ENCODE measurements at regions of chr3 and their contacts with region 1.

Region 1: DNA sequence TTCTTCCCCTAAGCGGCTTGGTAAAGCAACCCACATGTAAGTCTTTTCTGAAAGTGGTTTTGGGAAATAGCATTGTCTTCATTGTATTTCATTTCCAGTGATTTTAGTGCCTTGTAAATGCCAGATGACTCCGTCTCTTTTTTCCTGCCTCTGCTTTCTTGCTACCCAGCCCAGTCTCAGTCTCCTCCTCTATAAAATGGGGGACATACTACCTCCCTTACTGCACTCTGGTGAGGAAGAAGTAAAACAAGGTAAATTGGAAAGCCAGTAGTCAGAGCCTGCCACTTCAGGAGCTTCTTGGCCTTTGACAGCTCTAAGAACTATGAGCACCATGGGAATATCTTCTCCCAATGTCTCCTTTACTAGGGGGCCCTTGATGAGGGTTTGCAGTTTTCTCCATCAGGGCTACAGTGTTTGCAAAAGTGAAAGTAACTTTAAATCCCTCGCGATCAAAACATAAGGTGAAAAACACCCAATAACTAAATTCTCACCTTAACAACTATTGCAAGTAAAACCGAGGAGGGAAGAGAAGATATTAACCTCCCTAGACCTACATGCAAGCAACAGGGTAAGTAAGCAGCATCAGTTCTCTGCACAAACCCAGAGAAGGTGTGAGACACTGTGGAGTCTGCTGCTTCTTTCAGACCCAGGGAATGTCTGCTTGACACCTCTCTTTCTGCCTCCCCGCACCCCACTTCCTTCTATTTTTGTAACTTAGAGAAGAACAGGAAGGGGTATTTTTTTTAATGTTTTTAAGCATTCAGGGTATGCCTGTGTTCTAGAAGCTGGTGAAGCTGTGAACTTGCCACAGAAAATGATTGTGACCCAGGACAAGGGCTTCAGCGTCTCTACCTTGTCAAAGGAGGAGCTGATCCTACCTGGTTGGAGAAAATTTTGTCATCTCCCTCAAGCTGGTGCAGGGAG is 159.1 kb upstream of the EOMES start:
- DNase-seq: peak; percentile 38
- ATAC-seq: peak; percentile 60
- H3K4me3 Mint-ChIP-seq: peak overlapping the region; percentile 71
- H3K27ac Mint-ChIP-seq: peak overlapping the region; percentile 79
- H3K4me1 Mint-ChIP-seq: peaks cover 57% of the 10 kb centered on the region
- H3K27me3 Mint-ChIP-seq: no peaks in the 10 kb centered on the region

Region 2: GRCh38 chr3:27721717-27722542 is 159.3 kb before region 1 on chr3 and contains the start of gene EOMES:
- CTCF ChIA-PET with region 1: no interaction called
- POLR2A ChIA-PET with region 1: no interaction called
- intact Hi-C with region 1: loop called in 1 of 2 experiments (anchors 10 kb)
- DNase-seq: peak; percentile 82
- ATAC-seq: peak; percentile 74
- H3K4me3 Mint-ChIP-seq: peak within 1 kb of the TSS; percentile 72
- H3K27ac Mint-ChIP-seq: no peak within 1 kb of the TSS
- H3K4me1 Mint-ChIP-seq: peaks cover 22% of the 10 kb centered on the region
- H3K27me3 Mint-ChIP-seq: peaks cover 72% of the 10 kb centered on the region
- total RNA-seq, gene EOMES: 0.25 TPM

Region 3: DNA sequence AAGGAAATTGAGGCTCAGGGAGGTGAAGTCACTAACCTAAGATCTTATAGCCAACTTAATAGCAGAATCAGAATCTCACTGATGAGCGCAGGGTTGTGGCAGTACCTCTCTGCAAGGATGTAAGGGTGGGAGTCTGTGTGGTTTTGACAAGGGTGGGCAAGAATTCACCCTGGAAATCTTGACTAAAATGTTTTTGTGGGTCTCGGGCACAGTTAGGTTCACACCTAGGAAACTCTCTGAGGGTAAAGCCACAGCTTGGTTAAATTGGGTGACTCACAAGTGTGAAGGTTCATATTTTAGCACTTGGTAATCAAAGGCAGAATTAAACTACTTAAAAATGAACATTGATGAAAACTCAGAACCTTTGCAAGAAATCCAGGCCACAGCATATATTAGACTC is 19.1 kb after region 1 on chr3:
- CTCF ChIA-PET with region 1: interaction called, 3 read pairs
- POLR2A ChIA-PET with region 1: no interaction called
- intact Hi-C with region 1: loop called in 1 of 2 experiments (anchors 1 kb)
- DNase-seq: peak; percentile 26
- ATAC-seq: peak; percentile 76
- H3K4me3 Mint-ChIP-seq: no peak overlapping the region
- H3K27ac Mint-ChIP-seq: no peak overlapping the region
- H3K4me1 Mint-ChIP-seq: peaks cover 43% of the 10 kb centered on the region
- H3K27me3 Mint-ChIP-seq: no peaks in the 10 kb centered on the region

Region 4: DNA sequence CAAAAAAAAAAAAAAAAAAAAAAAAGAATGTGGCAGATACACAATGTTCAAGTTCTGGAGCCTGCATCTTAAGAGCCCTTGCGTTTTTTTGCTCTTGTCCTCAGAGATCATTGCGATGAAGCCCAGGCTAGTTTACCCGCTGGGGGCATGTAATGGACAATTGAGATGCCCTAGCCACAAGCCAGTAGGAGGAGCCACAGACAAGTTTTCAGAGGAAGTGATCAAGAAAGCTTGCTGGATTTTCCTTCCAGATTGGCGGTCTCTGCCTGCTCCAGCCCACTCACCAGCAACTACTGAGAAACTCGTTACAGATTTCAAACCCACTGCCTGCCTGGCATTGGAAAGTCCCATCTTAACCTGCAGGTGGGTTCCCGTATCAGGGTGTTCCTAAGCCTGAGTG is 33.0 kb after region 1 on chr3:
- CTCF ChIA-PET with region 1: no interaction called
- POLR2A ChIA-PET with region 1: no interaction called
- intact Hi-C with region 1: no loop called
- DNase-seq: no peak
- ATAC-seq: no peak
- H3K4me3 Mint-ChIP-seq: no peak overlapping the region
- H3K27ac Mint-ChIP-seq: no peak overlapping the region
- H3K4me1 Mint-ChIP-seq: peaks cover 3% of the 10 kb centered on the region
- H3K27me3 Mint-ChIP-seq: no peaks in the 10 kb centered on the region

Region 5: GRCh38 chr3:28241221-28242160 is 360.3 kb after region 1 on chr3 and contains the start of gene CMC1:
- CTCF ChIA-PET with region 1: no interaction called
- POLR2A ChIA-PET with region 1: no interaction called
- intact Hi-C with region 1: loop called in 1 of 2 experiments (anchors 5 kb)
- DNase-seq: peak; percentile 96
- ATAC-seq: peak; percentile 97
- H3K4me3 Mint-ChIP-seq: peak within 1 kb of the TSS; percentile 83
- H3K27ac Mint-ChIP-seq: peak within 1 kb of the TSS; percentile 91
- H3K4me1 Mint-ChIP-seq: peaks cover 45% of the 10 kb centered on the region
- H3K27me3 Mint-ChIP-seq: no peaks in the 10 kb centered on the region
- total RNA-seq, gene CMC1: 21.6 to 28.3 TPM